Thyroid gland (tissue), 4 donors: ENCODE measurements at regions of chr12 and their contacts with region 1.

Region 1: DNA sequence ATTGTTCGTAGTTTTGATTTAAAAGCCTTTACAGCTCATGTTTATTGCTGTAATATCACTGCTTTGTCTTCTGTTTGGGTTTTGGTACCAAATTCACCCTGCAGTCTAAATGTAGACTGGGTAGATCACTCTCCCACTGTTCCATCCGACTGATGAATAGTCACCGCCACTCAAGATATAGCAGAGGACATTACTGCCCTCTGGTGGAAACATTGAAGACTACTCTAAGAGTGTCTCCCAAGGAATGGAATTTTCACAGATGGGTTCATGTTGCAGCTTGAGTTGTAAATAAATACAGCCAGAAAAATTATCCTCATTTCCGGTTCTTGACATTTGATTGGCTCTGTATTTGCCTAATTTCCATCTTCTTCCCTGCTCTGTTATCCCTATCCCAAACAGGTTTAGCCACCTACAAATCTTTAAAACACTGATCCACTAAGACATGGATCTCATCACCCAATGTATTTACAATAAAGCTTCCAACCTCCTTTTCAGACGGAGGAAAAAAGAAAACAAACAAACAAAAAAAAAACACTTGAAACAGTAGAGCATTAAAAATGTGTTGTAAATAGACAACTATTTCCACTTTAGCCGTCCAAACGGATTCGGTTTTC is 198.3 kb upstream of the CPNE8 start:
- DNase-seq: peak in 1 of 2 donors; percentile 2
- H3K4me3 ChIP-seq: no peak overlapping the region
- H3K27ac ChIP-seq: no peak overlapping the region
- H3K4me1 ChIP-seq: no peaks in the 10 kb centered on the region
- H3K27me3 ChIP-seq: no peaks in the 10 kb centered on the region
- CTCF ChIP-seq: peak; percentile 44 to 78 (median 66)
- POLR2A ChIP-seq: no peak

Region 2: GRCh38 chr12:38324896-38325295 is 778.8 kb before region 1 on chr12:
- intact Hi-C with region 1: loop called (anchors 10 kb)
- DNase-seq: no peak
- H3K4me3 ChIP-seq: no peak overlapping the region
- H3K27ac ChIP-seq: no peak overlapping the region
- H3K4me1 ChIP-seq: no peaks in the 10 kb centered on the region
- H3K27me3 ChIP-seq: no peaks in the 10 kb centered on the region
- CTCF ChIP-seq: no peak
- POLR2A ChIP-seq: no peak

Region 3: DNA sequence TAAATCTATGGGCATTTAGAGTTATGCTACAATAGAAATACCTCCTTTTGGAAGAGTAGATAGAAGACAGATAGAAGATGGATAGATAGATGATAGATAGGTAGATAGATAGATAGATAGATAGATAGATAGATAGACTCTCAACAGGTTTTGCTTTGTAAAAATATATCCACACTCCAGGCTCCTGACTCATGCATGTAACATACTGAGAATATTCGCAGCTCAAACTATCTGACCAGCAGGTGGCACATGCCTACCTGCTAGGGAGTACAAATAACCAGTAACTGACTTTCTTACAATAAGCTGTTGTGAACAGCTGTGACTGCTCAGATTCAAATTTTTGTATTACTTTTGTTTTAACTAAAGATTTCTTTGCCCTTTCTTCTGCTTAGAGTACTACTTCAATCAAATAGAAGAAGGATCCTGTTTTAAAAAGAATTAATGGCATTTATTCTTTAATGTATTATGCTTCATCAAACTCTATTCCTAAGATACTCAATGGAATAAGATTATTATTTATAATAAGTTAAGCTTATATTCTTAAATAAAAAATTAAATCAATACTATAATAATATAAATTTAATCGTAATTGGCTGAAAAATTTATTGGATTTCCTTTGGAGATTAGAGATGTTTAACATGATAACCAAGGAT is 182.5 kb before region 1 on chr12:
- intact Hi-C with region 1: loop called (anchors 10 kb)
- DNase-seq: peak; percentile 59 to 68
- H3K4me3 ChIP-seq: no peak overlapping the region
- H3K27ac ChIP-seq: no peak overlapping the region
- H3K4me1 ChIP-seq: no peaks in the 10 kb centered on the region
- H3K27me3 ChIP-seq: no peaks in the 10 kb centered on the region
- CTCF ChIP-seq: peak in 5 of 6 experiments; percentile 24 to 66 (median 51)
- POLR2A ChIP-seq: no peak

Region 4: DNA sequence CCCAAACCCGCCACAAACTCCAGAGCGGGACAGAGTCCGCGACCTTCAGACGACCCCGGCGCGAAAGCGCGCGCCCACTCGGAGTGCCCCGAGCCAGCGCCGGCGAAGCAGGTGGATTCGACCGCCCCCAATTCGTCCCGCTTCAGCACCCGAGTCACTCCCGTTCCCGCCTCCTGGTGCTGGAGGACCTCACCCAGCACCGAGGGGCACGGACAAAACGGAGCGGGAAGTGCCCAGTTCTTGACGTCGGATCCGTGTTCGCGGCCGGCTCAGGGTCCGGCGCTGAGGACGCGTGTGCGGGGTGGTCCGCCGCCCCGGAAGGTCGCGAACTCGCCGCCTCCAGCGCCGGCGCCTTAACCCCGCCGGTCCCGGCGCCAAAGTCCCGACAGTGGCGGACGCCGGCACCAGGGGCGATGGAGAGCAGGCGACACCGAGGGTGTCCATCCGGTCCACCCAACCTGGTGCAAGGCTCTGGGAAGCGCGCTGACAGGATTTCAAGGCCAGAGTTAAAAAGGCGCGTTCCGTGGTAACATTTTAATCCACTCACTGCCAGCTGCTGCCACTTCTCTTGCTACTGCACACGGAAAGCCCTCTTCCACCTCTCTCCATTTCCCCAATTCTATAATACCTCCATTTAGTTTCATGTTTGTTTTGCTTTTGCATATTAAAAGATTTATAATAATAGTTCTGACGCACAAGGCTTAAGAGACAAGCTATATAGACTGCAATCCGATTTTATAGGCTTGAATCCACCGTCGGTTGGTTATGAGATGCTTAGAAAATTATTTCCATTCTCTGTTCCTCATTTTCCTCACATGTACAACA is 41.7 kb after region 1 on chr12:
- intact Hi-C with region 1: no loop called
- DNase-seq: peak; percentile 23 to 66
- H3K4me3 ChIP-seq: peak overlapping the region in 2 of 3 donors; percentile 8 to 42
- H3K27ac ChIP-seq: peak overlapping the region in 1 of 3 donors; percentile 32
- H3K4me1 ChIP-seq: no peaks in the 10 kb centered on the region
- H3K27me3 ChIP-seq: no peaks in the 10 kb centered on the region
- CTCF ChIP-seq: peak; percentile 32 to 82 (median 66)
- POLR2A ChIP-seq: no peak

Region 5: DNA sequence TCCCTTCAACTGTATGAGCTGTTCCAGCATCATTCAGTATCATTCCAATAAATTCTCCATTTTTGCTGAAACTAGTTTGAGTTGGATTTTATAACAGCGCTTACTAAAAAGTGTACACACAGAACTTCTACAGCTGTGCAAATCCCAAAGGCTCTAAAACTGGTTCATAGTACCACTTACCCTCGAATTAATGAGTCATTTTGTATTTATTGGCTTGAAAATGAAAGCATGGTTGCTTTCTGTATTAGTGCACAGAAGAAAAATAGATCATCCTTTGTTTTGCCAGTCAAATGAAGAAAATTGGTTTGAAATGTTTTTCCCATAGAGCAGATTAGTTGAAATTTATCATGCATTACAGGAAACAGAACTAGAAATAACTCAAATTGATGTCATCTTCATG is 70.1 kb after region 1 on chr12:
- intact Hi-C with region 1: no loop called
- DNase-seq: no peak
- H3K4me3 ChIP-seq: no peak overlapping the region
- H3K27ac ChIP-seq: no peak overlapping the region
- H3K4me1 ChIP-seq: no peaks in the 10 kb centered on the region
- H3K27me3 ChIP-seq: no peaks in the 10 kb centered on the region
- CTCF ChIP-seq: no peak
- POLR2A ChIP-seq: no peak